Stomach (tissue), 19 donors: ENCODE measurements at regions of chr4 and their contacts with region 1.

Region 1: GRCh38 chr4:181528570-181529184 is 714.5 kb upstream of the TENM3 start:
- DNase-seq: peak; percentile 78 to 90
- H3K4me3 ChIP-seq: no peak overlapping the region
- H3K27ac ChIP-seq: no peak overlapping the region
- H3K4me1 ChIP-seq: no peaks in the 10 kb centered on the region
- H3K27me3 ChIP-seq: no peaks in the 10 kb centered on the region
- CTCF ChIP-seq: peak in 5 of 7 experiments; percentile 54 to 76 (median 70)
- EP300 ChIP-seq: no peak
- POLR2A ChIP-seq: no peak

Region 2: DNA sequence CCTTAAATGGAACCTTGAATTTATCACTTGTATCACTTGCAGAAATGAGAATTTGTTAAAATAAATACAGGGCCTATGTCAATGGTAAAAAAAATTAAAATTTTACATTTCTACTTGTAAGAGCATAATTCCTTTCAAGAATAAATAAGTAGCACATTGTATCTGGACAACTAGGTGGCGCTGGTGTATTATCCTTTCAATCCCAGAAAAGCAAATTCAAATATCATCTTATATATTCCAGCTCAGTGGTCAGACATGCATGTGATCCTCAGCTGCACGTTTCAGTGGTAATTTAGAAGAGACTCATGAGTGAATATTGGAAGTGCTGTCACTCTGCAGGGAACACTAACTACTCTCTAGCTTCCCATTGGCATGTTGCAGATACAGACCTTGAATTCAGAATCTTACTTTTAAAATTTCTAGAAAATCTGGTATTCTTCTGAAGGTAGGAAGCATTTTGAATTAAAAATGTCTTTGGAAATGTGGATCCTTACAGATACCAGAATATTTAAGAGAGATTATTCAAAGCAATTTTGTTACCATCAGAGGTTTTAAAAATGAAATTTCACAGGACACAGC is 700.1 kb before region 1 on chr4:
- intact Hi-C with region 1: loop called (anchors 10 kb)
- DNase-seq: peak in 1 of 2 donors; percentile 88
- H3K4me3 ChIP-seq: no peak overlapping the region
- H3K27ac ChIP-seq: no peak overlapping the region
- H3K4me1 ChIP-seq: peaks cover 0 to 11% (median 0%) of the 10 kb centered on the region in 4 donors
- H3K27me3 ChIP-seq: no peaks in the 10 kb centered on the region
- CTCF ChIP-seq: peak in 5 of 7 experiments; percentile 39 to 66 (median 44)
- EP300 ChIP-seq: no peak
- POLR2A ChIP-seq: no peak

Region 3: DNA sequence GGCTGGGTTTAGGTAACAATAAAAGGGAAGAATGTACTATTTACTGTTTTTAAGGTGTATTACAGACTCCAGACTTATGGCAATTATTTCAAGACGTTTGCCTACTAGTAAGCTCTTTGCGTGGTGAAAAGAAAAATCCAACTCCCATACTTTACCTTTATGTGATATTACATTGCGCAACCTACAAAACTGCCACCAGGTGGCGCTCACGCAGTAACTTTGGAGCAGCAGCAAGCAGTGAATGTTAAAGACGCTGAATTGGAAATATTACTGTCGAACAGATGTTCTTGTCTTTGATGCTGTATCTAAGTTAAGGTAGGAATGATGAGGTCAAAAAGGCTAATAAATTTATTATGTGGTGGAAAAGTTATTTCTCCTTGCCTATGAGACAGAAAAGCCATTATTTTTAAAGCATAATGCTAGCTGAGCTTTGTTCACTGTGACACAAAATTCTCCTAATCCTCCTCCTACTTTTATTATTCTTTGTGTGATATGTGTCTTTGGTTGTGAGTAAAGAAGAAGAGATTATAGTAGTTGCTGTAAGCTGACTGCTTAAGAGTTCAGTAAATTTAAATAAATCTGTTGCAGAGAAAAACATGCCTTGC is 385.3 kb before region 1 on chr4:
- intact Hi-C with region 1: loop called (anchors 5 kb)
- DNase-seq: peak; percentile 85 to 93
- H3K4me3 ChIP-seq: no peak overlapping the region
- H3K27ac ChIP-seq: no peak overlapping the region
- H3K4me1 ChIP-seq: no peaks in the 10 kb centered on the region
- H3K27me3 ChIP-seq: peaks cover 0 to 3% (median 0%) of the 10 kb centered on the region in 3 donors
- CTCF ChIP-seq: peak in 5 of 7 experiments; percentile 64 to 94 (median 79)
- EP300 ChIP-seq: no peak
- POLR2A ChIP-seq: no peak